Mammary epithelial cell (primary cell): ENCODE measurements at regions of chr4 and their contacts with region 1.

Region 1: GRCh38 chr4:157616741-157617472 is 396.4 kb downstream of the GRIA2 start:
- DNase-seq: no peak
- H3K4me3 ChIP-seq: no peak overlapping the region
- H3K27ac ChIP-seq: no peak overlapping the region
- H3K4me1 ChIP-seq: no peaks in the 10 kb centered on the region
- H3K27me3 ChIP-seq: no peaks in the 10 kb centered on the region
- CTCF ChIP-seq: no peak

Region 2: DNA sequence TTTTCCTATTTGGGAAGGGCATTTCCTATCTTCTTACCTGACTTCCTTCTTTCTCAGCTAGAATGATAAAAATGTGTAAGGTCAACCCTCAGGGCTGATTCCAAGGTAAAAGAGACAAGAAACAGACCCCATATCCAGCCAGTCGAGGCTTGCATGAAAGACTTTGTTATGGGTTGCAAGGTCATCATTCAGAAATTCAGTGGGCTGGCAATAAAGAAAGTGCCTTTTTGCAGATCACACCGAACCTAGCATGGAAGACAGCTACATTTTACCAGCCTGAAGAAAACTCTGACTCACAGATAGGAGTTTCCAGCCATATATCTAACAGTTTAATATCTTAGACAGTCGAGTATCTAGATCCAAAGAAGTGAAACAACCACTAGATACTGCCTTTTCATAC is 732.7 kb before region 1 on chr4:
- CTCF ChIA-PET with region 1: no interaction called
- dilution Hi-C with region 1: no loop called
- in situ Hi-C with region 1: no loop called
- intact Hi-C with region 1: no loop called
- DNase-seq: peak; percentile 79
- H3K4me3 ChIP-seq: peak overlapping the region in 2 of 3 experiments; percentile 17 to 29
- H3K27ac ChIP-seq: peak overlapping the region; percentile 49
- H3K4me1 ChIP-seq: peaks cover 15% of the 10 kb centered on the region
- H3K27me3 ChIP-seq: no peaks in the 10 kb centered on the region
- CTCF ChIP-seq: no peak

Region 3: DNA sequence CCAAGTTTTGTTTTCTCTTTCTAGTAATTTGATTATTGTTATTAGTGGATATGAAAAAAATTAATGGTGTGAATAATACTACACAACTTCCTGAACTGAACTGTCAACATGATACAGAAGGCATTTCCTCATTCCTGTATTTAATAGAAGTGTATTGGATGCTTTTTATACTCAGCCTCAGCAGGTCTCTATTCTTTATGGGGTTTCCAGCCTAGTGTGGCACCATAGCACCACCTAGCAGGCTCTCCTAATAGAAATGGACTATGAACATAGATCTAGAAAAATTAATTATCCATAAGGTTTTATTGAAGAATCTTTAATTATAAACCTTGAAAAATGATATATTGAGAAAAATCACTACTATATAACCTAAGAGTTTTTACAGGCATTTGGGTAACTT is 488.5 kb before region 1 on chr4:
- CTCF ChIA-PET with region 1: no interaction called
- dilution Hi-C with region 1: no loop called
- in situ Hi-C with region 1: no loop called
- intact Hi-C with region 1: no loop called
- DNase-seq: peak; percentile 36
- H3K4me3 ChIP-seq: no peak overlapping the region
- H3K27ac ChIP-seq: no peak overlapping the region
- H3K4me1 ChIP-seq: no peaks in the 10 kb centered on the region
- H3K27me3 ChIP-seq: no peaks in the 10 kb centered on the region
- CTCF ChIP-seq: peak; percentile 39 to 68

Region 4: DNA sequence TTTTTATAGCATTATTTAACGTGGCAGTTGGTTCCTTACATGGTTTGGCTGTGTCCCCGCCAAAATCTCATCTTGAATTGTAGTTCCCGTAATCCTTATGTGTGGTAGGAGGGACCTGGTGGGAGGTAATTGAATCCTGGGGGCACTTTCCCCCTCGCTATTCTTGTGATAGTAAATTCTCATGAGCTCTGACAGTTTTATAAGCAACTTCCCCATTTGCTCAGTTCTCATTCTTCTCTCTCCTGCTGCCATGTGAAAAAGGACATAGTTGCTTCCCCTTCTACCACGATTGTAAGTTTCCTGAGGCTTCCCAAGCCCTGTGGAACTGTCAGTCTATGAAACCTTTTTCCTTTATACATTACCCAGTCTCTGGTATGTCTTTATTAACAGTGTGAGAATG is 66.9 kb before region 1 on chr4:
- CTCF ChIA-PET with region 1: no interaction called
- dilution Hi-C with region 1: no loop called
- in situ Hi-C with region 1: no loop called
- intact Hi-C with region 1: no loop called
- DNase-seq: no peak
- H3K4me3 ChIP-seq: no peak overlapping the region
- H3K27ac ChIP-seq: no peak overlapping the region
- H3K4me1 ChIP-seq: no peaks in the 10 kb centered on the region
- H3K27me3 ChIP-seq: no peaks in the 10 kb centered on the region
- CTCF ChIP-seq: no peak

Region 5: GRCh38 chr4:157674699-157675098 is 57.8 kb after region 1 on chr4:
- CTCF ChIA-PET with region 1: no interaction called
- dilution Hi-C with region 1: loop called (anchors 5 kb)
- in situ Hi-C with region 1: no loop called
- intact Hi-C with region 1: no loop called
- DNase-seq: no peak
- H3K4me3 ChIP-seq: no peak overlapping the region
- H3K27ac ChIP-seq: no peak overlapping the region
- H3K4me1 ChIP-seq: no peaks in the 10 kb centered on the region
- H3K27me3 ChIP-seq: no peaks in the 10 kb centered on the region
- CTCF ChIP-seq: no peak

Region 6: DNA sequence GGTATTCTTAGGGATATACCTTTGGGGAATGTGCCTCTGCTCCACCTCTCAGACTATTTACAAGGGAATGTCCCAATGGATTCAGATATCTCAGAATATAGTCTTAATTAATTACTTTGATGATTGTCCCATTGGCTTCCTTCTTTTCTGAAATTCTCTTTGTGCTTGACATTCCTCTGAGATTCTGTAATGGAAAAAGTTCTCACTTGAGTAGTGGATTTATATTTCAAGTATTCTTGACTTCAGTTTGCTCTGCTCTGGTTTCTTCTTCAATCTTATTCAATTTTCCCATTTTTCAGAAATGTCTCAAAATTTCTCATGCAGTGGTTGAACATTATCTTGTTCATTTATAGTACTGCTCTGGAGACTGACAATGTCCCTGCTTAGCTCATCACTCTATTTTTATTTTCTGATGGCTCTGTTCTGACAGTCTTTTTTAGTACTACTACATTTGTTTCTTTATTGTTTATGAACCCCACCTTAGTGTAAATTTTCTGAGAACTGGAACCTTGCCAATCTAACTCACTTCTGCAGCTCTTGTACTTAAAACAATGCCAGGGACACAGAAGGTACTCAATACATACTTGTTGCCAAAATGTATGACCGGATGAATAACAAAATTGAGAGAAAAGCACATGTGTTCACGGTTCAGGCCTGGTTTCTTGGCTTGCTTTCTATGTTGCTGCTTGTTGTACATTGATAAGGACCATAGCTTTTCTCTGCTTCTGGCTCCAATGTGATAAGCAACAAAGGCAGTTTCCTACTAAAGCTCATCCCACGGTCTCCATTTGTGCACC is 84.2 kb after region 1 on chr4:
- CTCF ChIA-PET with region 1: no interaction called
- dilution Hi-C with region 1: no loop called
- in situ Hi-C with region 1: no loop called
- intact Hi-C with region 1: no loop called
- DNase-seq: no peak
- H3K4me3 ChIP-seq: no peak overlapping the region
- H3K27ac ChIP-seq: no peak overlapping the region
- H3K4me1 ChIP-seq: no peaks in the 10 kb centered on the region
- H3K27me3 ChIP-seq: no peaks in the 10 kb centered on the region
- CTCF ChIP-seq: no peak